CD4-positive, alpha-beta T cell (primary cell): ENCODE measurements at regions of chr11 and their contacts with region 1.

Region 1: DNA sequence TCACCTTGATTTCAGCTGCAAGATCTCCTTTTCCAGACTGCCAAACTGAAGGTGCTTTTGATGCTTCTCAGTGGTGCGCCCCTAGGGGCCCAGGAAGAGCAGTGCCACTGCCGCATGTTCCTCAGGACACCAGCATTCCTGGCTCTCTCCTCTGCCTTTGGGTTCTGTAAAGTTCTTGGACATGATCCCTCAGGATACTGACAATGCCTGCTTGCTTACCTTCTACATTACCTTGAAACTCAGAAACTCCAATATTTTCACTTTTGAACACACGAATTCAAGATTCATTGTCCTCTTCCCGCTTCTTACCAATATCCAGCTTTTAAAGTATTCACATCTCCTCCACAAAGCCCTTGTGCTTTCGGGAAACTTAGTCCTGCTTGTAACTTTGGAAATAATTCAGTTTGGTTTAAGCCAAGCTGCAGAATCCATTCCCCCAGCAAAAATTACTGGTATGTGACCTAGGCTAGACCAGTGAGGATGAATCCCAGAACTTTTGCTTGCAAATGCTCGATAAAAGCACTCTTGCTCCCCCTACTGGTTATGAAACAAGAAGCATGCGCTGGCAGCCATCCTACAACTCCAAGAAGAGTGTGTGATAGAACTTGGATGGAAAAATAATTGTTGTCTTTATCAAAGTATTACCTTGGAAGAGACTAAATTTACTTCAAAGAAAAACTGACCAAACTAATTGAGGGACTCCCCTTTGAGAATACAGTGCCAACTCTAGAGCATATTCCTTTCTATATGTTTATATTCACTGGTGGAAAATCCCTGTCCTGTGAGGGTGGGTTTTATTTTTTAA is 16.5 kb upstream of the OR5B21 start:
- DNase-seq: peak in 13 of 14 experiments; percentile 16 to 84 (median 35)
- ATAC-seq: peak; percentile 65
- H3K4me3 ChIP-seq: peak overlapping the region; percentile 39
- H3K4me3 Mint-ChIP-seq: peak overlapping the region; percentile 63
- H3K27ac ChIP-seq: peak overlapping the region; percentile 50 to 83
- H3K27ac Mint-ChIP-seq: peak overlapping the region; percentile 95
- H3K4me1 ChIP-seq: peaks cover 17% of the 10 kb centered on the region
- H3K4me1 Mint-ChIP-seq: peaks cover 78% of the 10 kb centered on the region
- H3K27me3 ChIP-seq: no peaks in the 10 kb centered on the region
- H3K27me3 Mint-ChIP-seq: no peaks in the 10 kb centered on the region
- CTCF ChIP-seq: peak; percentile 93

Region 2: DNA sequence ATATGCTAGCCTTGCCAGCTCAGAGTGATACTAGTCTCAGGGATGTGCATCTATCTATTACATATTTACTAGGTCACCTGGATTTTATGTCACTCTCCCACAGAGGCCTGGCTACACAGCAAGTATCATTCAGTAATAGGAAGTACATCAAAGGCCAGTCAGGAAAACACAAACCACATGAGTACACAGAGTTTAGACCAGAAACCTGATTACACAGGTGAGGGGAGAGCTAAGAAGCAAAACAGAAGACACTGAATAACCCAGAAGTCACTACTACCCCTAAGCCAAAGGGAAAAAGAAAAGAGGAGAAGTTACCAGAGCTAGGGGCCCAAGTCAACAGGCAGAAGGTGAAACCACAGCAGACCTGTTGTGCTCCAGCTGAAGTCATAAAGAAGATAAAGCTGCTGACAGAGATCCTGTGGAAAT is 38.0 kb after region 1 on chr11:
- CTCF ChIA-PET with region 1: interaction called, 13 read pairs
- POLR2A ChIA-PET with region 1: interaction called, 5 read pairs
- intact Hi-C with region 1: loop called in 1 of 2 experiments (anchors 5 kb)
- DNase-seq: peak in 3 of 14 experiments; percentile 32 to 47 (median 34)
- ATAC-seq: peak; percentile 59
- H3K4me3 ChIP-seq: no peak overlapping the region
- H3K4me3 Mint-ChIP-seq: peak overlapping the region; percentile 8
- H3K27ac ChIP-seq: peak overlapping the region in 1 of 2 donors; percentile 11
- H3K27ac Mint-ChIP-seq: peak overlapping the region; percentile 76
- H3K4me1 ChIP-seq: peaks cover 32% of the 10 kb centered on the region
- H3K4me1 Mint-ChIP-seq: peaks cover 72% of the 10 kb centered on the region
- H3K27me3 ChIP-seq: no peaks in the 10 kb centered on the region
- H3K27me3 Mint-ChIP-seq: no peaks in the 10 kb centered on the region
- CTCF ChIP-seq: no peak

Region 3: DNA sequence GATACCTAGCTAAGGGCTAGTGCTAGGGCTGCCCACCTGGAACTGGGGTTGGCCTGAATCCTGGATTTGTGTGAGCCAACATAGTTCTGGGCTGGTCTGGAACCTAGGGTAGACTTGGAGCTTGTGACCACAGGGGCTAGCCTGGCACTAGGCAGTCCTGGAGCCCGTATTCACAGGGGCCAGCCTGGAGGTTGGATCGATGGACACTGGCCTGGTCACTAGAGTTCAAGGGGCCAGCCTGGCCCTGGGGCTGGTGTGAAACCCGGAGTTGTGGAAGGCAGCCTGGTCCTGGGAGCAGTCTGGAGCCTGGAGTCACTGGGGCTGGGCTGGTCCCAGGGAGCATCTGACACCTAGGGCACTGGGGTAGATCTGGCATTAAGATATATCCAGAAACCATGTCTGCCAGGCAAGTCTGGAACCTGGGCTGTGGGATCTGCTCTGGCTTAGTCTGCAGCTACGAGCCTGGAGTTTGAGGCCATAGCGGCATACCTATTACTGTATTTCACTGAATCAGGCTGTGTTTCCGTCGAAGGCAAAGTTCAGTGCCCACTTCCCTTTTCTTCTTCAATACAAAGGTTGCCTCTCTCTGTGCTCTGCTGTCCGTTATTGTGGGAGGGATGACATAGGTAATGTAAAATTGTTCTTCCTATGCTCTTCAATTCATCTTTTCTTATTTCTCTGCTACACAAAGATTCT is 552.6 kb after region 1 on chr11:
- CTCF ChIA-PET with region 1: no interaction called
- POLR2A ChIA-PET with region 1: no interaction called
- intact Hi-C with region 1: no loop called
- DNase-seq: no peak
- ATAC-seq: no peak
- H3K4me3 ChIP-seq: no peak overlapping the region
- H3K4me3 Mint-ChIP-seq: no peak overlapping the region
- H3K27ac ChIP-seq: no peak overlapping the region
- H3K27ac Mint-ChIP-seq: no peak overlapping the region
- H3K4me1 ChIP-seq: no peaks in the 10 kb centered on the region
- H3K4me1 Mint-ChIP-seq: peaks cover 12% of the 10 kb centered on the region
- H3K27me3 ChIP-seq: peaks cover 0 to 14% of the 10 kb centered on the region in 2 experiments
- H3K27me3 Mint-ChIP-seq: peaks cover 56% of the 10 kb centered on the region
- CTCF ChIP-seq: no peak